Breast epithelium (tissue), 4 donors: ENCODE measurements at regions of chr14 and their contacts with region 1.

Region 1: GRCh38 chr14:95616464-95617117 is 69.6 kb upstream of the TCL1B start:
- DNase-seq: no peak
- H3K4me3 ChIP-seq: no peak overlapping the region
- H3K27ac ChIP-seq: no peak overlapping the region
- H3K4me1 ChIP-seq: no peaks in the 10 kb centered on the region
- H3K27me3 ChIP-seq: peaks cover 0 to 11% of the 10 kb centered on the region in 2 donors
- CTCF ChIP-seq: no peak
- POLR2A ChIP-seq: no peak

Region 2: DNA sequence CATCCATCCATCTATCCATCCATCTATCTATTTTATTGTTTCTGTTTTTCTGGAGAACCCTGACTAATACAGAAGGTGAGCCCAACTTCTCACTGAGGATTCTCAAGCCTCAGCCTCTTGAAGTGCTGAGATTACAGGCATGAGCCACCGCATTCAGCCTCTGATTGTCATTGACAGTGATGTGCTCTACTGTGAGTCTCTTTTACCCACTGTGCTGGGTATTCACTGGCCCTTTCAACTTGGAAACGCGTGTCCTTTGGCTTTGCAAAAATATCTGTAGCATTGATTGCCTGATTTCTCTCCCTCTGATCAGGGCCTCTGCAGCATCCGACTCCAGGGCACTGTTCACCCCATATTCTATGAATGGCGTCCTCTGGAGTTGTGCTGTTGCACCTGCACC is 40.0 kb after region 1 on chr14:
- intact Hi-C with region 1: loop called (anchors 2 kb)
- DNase-seq: no peak
- H3K4me3 ChIP-seq: no peak overlapping the region
- H3K27ac ChIP-seq: no peak overlapping the region
- H3K4me1 ChIP-seq: no peaks in the 10 kb centered on the region
- H3K27me3 ChIP-seq: peaks cover 0 to 13% of the 10 kb centered on the region in 2 donors
- CTCF ChIP-seq: no peak
- POLR2A ChIP-seq: no peak